H1 (cell line): ENCODE measurements at regions of chr1 and their contacts with region 1.

Region 1: DNA sequence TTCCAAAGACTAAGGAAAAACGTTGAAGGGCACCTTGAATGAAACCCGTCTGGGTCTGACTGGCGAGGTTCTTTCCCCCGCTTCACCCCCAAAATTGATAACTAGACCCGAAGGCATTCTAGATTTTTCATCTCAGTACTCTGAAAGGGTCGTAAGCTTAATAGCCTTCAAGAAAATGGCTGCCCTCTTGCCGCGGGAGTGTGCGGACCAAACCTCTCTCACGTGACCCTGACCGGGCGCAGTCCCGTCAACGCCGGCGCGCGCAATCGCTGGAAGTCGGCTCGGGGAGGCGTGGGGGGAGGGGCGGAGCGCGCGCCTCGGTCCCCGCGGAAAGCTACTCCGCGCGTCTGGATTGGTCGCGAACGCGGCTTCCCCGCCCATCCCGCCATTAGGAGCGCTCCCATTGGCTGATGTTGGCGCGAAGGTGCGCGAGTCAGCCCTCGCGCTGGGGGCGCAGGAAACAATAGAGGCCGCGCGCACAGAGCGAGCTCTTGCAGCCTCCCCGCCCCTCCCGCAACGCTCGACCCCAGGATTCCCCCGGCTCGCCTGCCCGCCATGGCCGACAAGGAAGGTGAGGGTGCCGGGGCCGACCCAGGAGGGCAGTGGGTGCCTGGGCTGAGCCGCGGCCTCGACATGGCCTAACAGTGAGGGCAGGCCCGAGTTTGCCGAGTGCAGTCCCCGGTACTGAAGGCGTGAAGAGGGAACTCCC is at the start of gene RBBP4:
- DNase-seq: peak; percentile 94 to 99
- H3K4me3 ChIP-seq: peak within 1 kb of the TSS; percentile 99
- H3K27ac ChIP-seq: peak within 1 kb of the TSS; percentile 99
- H3K4me1 ChIP-seq: peaks cover 0 to 5% (median 1%) of the 10 kb centered on the region in 4 experiments; a peak in 4 of 7 replicates
- H3K27me3 ChIP-seq: no peaks in the 10 kb centered on the region
- CTCF ChIP-seq: no peak
- EP300 ChIP-seq: no peak
- POLR2A ChIP-seq: no peak; a peak in 1 of 3 replicates
- RAD21 ChIP-seq: no peak
- total RNA-seq, gene RBBP4: 397 and 402 TPM in 2 replicates

Region 2: DNA sequence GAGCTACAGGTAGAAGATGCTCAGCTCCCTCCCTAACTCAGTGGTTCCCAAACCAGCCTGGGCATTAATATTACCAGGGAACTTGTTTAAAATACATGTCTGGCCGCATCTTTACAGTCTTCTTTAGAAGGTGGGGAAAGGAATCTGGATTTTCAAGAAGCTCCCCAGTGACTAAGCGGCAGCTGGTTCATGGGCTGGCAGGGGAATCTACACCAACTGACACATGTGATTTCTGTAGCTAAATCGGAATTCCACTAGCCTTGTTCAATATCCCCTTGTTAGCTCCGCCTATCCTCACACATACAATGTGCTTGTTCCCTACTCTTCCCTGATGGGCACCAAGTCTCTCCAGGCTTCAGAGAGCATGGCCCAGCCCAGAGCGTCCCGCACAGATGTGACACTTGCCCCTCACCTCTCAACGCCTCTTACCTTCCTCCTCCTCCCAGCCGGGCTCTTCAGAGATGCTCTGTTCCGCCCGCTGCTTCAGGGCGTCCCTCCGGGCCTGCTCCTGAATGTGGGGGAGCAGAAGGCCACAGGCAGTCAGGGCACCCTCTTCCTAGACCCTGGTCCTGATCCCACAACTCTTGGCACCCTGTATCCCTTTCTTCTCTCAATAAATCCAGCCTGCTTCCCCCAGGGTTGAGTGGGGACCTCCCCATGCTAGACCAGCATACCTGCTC is 273.2 kb before region 1 on chr1:
- CTCF ChIA-PET with region 1: no interaction called
- POLR2A ChIA-PET with region 1: no interaction called
- DNase-seq: no peak
- H3K4me3 ChIP-seq: no peak overlapping the region
- H3K27ac ChIP-seq: no peak overlapping the region
- H3K4me1 ChIP-seq: no peaks in the 10 kb centered on the region
- H3K27me3 ChIP-seq: no peaks in the 10 kb centered on the region
- CTCF ChIP-seq: no peak
- EP300 ChIP-seq: no peak
- POLR2A ChIP-seq: no peak
- RAD21 ChIP-seq: no peak

Region 3: GRCh38 chr1:32521165-32521564 is 129.7 kb before region 1 on chr1:
- CTCF ChIA-PET with region 1: interaction called, 11 read pairs
- POLR2A ChIA-PET with region 1: interaction called, 9 read pairs
- DNase-seq: no peak
- H3K4me3 ChIP-seq: no peak overlapping the region; a peak in 1 of 8 replicates
- H3K27ac ChIP-seq: no peak overlapping the region
- H3K4me1 ChIP-seq: no peaks in the 10 kb centered on the region
- H3K27me3 ChIP-seq: no peaks in the 10 kb centered on the region
- CTCF ChIP-seq: peak; percentile 12 to 36 (median 14); a peak in 3 of 4 replicates
- EP300 ChIP-seq: no peak
- POLR2A ChIP-seq: no peak
- RAD21 ChIP-seq: peak; percentile 24 to 46

Region 4: GRCh38 chr1:32600034-32600433 is 50.9 kb before region 1 on chr1:
- CTCF ChIA-PET with region 1: no interaction called
- POLR2A ChIA-PET with region 1: no interaction called
- DNase-seq: no peak
- H3K4me3 ChIP-seq: no peak overlapping the region
- H3K27ac ChIP-seq: no peak overlapping the region
- H3K4me1 ChIP-seq: no peaks in the 10 kb centered on the region
- H3K27me3 ChIP-seq: no peaks in the 10 kb centered on the region
- CTCF ChIP-seq: no peak
- EP300 ChIP-seq: no peak
- POLR2A ChIP-seq: no peak
- RAD21 ChIP-seq: no peak

Region 5: DNA sequence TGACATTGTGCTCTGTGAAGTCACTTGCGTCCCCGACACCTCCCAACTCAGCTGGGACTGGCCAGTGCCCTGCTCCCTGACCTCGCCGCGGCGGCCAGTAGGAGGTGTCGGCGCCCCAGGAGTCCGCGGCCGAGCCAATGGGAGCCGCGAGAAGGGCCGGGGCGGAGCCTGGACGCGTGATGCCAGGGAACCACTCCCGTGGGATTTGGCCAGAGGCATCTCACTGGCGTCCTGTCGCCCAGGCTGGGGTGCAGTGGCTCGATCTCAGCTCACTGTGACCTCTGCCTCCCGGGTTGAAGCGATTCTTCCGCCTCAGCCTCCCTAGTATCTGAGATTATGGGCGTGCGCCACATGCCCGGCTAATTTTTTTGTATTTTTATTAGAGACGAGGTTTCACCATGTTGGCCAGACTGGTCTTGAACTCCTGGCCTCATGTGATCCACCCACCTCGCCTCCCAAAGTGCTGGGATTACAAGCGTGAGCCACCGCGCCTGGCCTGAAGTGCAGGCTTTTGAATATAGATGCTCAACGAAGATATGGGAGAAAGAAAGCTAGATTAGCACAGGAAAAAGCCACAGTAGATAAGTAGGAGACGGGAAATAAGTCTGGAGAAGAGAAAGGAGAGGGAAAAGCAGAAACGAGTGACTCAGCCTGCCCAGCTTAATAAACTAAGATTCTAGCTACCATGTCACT is 38.6 kb before region 1 on chr1:
- CTCF ChIA-PET with region 1: no interaction called
- POLR2A ChIA-PET with region 1: interaction called, 12 read pairs
- DNase-seq: peak; percentile 23 to 96
- H3K4me3 ChIP-seq: peak overlapping the region; percentile 32 to 72 (median 53)
- H3K27ac ChIP-seq: no peak overlapping the region
- H3K4me1 ChIP-seq: no peaks in the 10 kb centered on the region; a peak in 1 of 7 replicates
- H3K27me3 ChIP-seq: no peaks in the 10 kb centered on the region
- CTCF ChIP-seq: peak in 1 of 3 experiments; percentile 7; a peak in 1 of 4 replicates
- EP300 ChIP-seq: no peak
- POLR2A ChIP-seq: peak in 1 of 2 experiments; percentile 85; a peak in 2 of 3 replicates
- RAD21 ChIP-seq: peak in 1 of 2 experiments; percentile 6; a peak in 1 of 4 replicates

Region 6: DNA sequence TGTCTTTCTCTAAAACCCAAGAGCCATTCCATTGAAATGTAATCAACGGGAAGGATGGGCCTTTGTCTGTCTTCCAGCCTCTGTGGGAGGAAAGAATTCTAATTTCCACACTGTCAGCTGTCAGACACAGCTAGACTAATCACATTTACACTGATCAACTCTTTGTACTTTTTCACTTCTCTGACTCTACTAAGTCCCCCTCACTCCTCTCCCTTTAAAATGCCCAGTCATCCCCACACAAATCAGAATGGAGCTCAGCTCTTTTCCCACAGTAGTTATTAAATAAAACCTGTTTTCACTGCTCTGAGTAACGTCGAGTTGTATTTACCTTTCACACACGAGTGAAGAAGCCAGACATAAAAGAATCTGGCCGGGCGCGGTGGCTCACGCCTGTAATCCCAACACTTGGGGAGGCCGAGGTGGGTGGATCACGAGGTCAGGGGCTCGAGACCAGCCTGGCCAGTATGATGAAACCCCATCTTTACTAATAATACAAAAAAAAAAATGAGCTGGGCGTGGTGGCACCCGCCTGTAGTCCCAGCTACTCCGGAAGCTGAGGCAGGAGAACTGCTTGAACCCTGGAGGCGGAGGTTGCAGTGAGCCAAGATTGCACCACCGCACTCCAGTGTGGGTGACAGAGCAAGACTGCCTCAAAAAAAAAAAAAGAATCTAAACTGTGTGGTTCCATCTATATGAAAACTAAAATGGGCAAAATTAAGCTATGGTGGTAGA is 13.8 kb before region 1 on chr1:
- CTCF ChIA-PET with region 1: no interaction called
- POLR2A ChIA-PET with region 1: interaction called, 115 read pairs
- DNase-seq: no peak
- H3K4me3 ChIP-seq: no peak overlapping the region
- H3K27ac ChIP-seq: no peak overlapping the region
- H3K4me1 ChIP-seq: peaks cover 8 to 21% (median 17%) of the 10 kb centered on the region in 4 experiments
- H3K27me3 ChIP-seq: no peaks in the 10 kb centered on the region
- CTCF ChIP-seq: no peak
- EP300 ChIP-seq: no peak
- POLR2A ChIP-seq: no peak
- RAD21 ChIP-seq: no peak

Region 7: DNA sequence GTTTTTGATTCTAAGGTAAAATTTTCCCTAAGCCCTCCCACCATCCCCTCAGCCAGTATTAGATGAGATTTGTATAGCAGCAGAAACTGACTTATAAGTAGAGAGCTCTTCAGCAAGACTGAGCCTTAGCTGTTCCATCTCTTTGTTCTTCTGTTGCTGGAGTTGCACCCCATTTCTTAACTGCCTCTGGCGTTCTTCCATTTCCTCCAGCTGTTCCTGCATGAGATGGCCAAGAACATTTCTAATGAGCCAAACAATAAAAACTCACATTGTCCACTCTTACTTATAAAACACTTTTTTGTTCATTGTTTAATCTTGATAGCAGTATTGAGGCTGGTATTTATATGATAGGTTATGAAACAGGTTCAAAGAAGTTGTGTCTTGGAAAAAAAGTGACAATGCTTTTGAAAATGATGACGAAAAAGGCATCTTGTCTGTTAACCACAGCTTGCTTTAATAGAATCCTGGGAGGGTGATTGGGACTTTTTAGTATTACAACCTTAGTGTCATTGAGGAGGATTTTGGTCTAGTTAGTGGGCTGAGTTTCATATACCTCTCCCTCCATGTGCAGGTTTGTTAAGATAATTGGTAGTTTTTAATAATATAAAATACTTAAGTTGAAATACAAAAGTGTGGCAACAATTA is 33.4 kb after region 1 on chr1:
- CTCF ChIA-PET with region 1: interaction called, 3 read pairs
- POLR2A ChIA-PET with region 1: interaction called, 28 read pairs
- DNase-seq: no peak
- H3K4me3 ChIP-seq: no peak overlapping the region
- H3K27ac ChIP-seq: no peak overlapping the region
- H3K4me1 ChIP-seq: no peaks in the 10 kb centered on the region
- H3K27me3 ChIP-seq: no peaks in the 10 kb centered on the region
- CTCF ChIP-seq: no peak
- EP300 ChIP-seq: no peak
- POLR2A ChIP-seq: no peak
- RAD21 ChIP-seq: no peak

Region 8: GRCh38 chr1:32817159-32817814 is 166.4 kb after region 1 on chr1 and contains the starts of genes S100PBP and YARS1:
- CTCF ChIA-PET with region 1: no interaction called
- POLR2A ChIA-PET with region 1: interaction called, 13 read pairs
- DNase-seq: peak; percentile 97 to 100
- H3K4me3 ChIP-seq: peak within 1 kb of the TSS; percentile 81 to 99 (median 93)
- H3K27ac ChIP-seq: peak within 1 kb of the TSS; percentile 95
- H3K4me1 ChIP-seq: peaks cover 0 to 7% (median 4%) of the 10 kb centered on the region in 4 experiments; a peak in 3 of 7 replicates
- H3K27me3 ChIP-seq: no peaks in the 10 kb centered on the region
- CTCF ChIP-seq: no peak
- EP300 ChIP-seq: peak in 1 of 2 experiments; percentile 96; a peak in 2 of 3 replicates
- POLR2A ChIP-seq: peak in 1 of 2 experiments; percentile 65; a peak in 2 of 3 replicates
- RAD21 ChIP-seq: no peak
- total RNA-seq, gene S100PBP: 65.7 and 68.3 TPM in 2 replicates
- total RNA-seq, gene YARS1: 226 and 230 TPM in 2 replicates